Activated CD4-positive, alpha-beta memory T cell treated with anti-CD3 and anti-CD28 coated beads for 36 hours (primary cell): ENCODE measurements at regions of chr5 and their contacts with region 1.

Region 1: DNA sequence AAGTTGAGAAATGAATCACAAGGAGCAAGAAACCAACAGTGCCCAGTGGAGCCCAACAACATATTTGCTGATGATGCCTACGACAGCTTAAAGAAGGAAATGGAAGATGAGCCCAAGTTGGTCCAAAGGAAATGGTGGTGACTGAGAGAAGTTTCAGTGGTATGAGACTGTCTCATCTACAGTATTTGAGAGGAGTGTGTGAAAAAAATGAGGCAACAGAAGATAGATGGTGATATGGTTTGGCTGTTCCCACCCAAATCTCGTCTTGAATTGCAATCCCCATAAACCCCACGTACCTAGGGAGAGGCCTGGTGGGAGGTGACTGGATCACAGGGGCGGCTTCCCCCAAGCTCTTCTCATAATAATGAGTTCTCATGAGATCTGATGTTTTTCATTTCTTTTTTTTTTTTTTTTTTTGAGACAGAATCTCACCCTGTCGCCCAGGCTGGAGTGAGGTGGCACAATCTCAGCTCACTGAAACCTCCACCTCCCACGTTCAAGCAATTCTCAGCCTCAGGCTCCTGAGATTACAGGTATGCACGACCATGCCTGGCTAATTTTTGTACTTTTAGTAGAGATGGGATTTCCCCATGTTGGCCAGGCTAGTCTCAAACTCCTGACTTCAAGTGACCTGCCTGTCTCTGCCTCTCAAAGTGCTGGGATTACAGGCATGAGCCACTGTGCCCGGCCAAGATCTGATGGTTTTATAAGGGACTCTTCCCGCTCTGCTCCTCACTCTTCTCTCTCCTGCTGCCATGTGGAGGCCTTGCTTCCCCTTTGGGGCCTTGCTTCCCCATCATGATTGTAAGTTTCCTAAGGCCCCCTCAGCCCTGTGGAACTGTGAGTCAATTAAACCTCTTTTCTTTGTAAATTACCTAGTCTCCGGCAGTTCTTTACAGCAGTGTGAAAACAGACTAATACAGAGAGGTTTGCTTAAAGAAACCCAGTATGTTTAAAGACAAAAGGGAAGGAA is 30.2 kb downstream of the EFCAB9 start:
- DNase-seq: peak; percentile 84
- H3K4me3 Mint-ChIP-seq: no peak overlapping the region
- H3K27ac Mint-ChIP-seq: peak overlapping the region; percentile 70
- H3K4me1 Mint-ChIP-seq: peaks cover 33% of the 10 kb centered on the region
- H3K27me3 Mint-ChIP-seq: peaks cover 4% of the 10 kb centered on the region

Region 2: GRCh38 chr5:171984748-171985419 is 239.3 kb before region 1 on chr5:
- CTCF ChIA-PET with region 1: no interaction called
- POLR2A ChIA-PET with region 1: interaction called, 3 read pairs
- intact Hi-C with region 1: loop called (anchors 1 kb)
- DNase-seq: peak; percentile 69
- H3K4me3 Mint-ChIP-seq: no peak overlapping the region
- H3K27ac Mint-ChIP-seq: peak overlapping the region; percentile 52
- H3K4me1 Mint-ChIP-seq: peaks cover 54% of the 10 kb centered on the region
- H3K27me3 Mint-ChIP-seq: no peaks in the 10 kb centered on the region

Region 3: GRCh38 chr5:172179361-172179989 is 44.7 kb before region 1 on chr5:
- CTCF ChIA-PET with region 1: interaction called, 3 read pairs
- POLR2A ChIA-PET with region 1: interaction called, 4 read pairs
- intact Hi-C with region 1: loop called (anchors 1 kb)
- DNase-seq: peak; percentile 67
- H3K4me3 Mint-ChIP-seq: peak overlapping the region; percentile 73
- H3K27ac Mint-ChIP-seq: peak overlapping the region; percentile 99
- H3K4me1 Mint-ChIP-seq: peaks cover 88% of the 10 kb centered on the region
- H3K27me3 Mint-ChIP-seq: no peaks in the 10 kb centered on the region

Region 4: GRCh38 chr5:172274921-172275753 is 51.0 kb after region 1 on chr5:
- CTCF ChIA-PET with region 1: interaction called, 3 read pairs
- POLR2A ChIA-PET with region 1: interaction called, 7 read pairs
- intact Hi-C with region 1: loop called (anchors 1 kb)
- DNase-seq: peak; percentile 82
- H3K4me3 Mint-ChIP-seq: no peak overlapping the region
- H3K27ac Mint-ChIP-seq: peak overlapping the region; percentile 36
- H3K4me1 Mint-ChIP-seq: peaks cover 42% of the 10 kb centered on the region
- H3K27me3 Mint-ChIP-seq: no peaks in the 10 kb centered on the region